Vagina (tissue), 2 donors: ENCODE measurements at regions of chr2 and their contacts with region 1.

Region 1: GRCh38 chr2:43086451-43087221 is 139.8 kb downstream of the ZFP36L2 start:
- DNase-seq: peak in 1 of 2 donors; percentile 99
- H3K4me3 ChIP-seq: no peak overlapping the region
- H3K27ac ChIP-seq: peak overlapping the region; percentile 82
- H3K4me1 ChIP-seq: peaks cover 68% of the 10 kb centered on the region
- H3K27me3 ChIP-seq: no peaks in the 10 kb centered on the region
- CTCF ChIP-seq: no peak
- POLR2A ChIP-seq: no peak

Region 2: DNA sequence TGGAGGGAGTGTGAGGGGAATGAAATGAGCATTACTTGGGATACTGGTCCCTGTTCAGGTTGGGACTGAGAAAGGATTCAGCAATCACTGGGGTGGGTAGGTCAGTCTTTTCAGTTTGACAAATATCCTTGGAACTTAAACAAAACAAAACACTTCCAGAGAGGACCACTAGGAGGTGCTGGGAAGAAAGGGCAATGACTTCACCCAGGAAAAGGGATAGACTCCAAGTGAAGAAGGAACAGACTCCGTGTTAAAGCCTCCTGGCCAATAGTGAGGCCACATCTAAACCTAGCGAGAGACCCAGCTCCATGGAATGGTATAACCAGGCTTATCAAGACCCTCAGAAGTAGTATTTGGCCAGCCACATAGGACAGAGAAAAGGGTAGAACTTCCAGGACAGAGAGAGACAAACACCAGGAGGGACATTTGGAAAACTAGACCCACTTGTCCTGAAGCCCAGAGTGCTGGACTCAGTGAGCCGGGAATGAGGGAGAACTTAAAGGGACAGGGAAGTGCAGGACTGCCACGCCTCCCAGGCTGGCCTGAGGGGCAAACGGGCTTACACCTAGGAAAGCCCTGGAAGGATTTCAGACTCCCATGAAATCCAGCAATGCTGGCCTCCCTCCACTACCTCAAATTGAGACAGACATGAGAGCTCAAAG is 573.2 kb before region 1 on chr2:
- intact Hi-C with region 1: no loop called
- DNase-seq: no peak
- H3K4me3 ChIP-seq: no peak overlapping the region
- H3K27ac ChIP-seq: no peak overlapping the region
- H3K4me1 ChIP-seq: no peaks in the 10 kb centered on the region
- H3K27me3 ChIP-seq: no peaks in the 10 kb centered on the region
- CTCF ChIP-seq: peak in 1 of 3 experiments; percentile 33
- POLR2A ChIP-seq: no peak

Region 3: GRCh38 chr2:43032213-43033015 is 54.2 kb before region 1 on chr2:
- intact Hi-C with region 1: loop called (anchors 10 kb)
- DNase-seq: no peak
- H3K4me3 ChIP-seq: no peak overlapping the region
- H3K27ac ChIP-seq: peak overlapping the region; percentile 65
- H3K4me1 ChIP-seq: peaks cover 30% of the 10 kb centered on the region
- H3K27me3 ChIP-seq: no peaks in the 10 kb centered on the region
- CTCF ChIP-seq: no peak
- POLR2A ChIP-seq: no peak